MCF 10A (cell line): ENCODE measurements at regions of chr18 and their contacts with region 1.

Region 1: GRCh38 chr18:23918401-23919032 is 96.0 kb upstream of the TTC39C start:
- DNase-seq: peak; percentile 84
- H3K4me3 Mint-ChIP-seq: no peak overlapping the region
- H3K27ac Mint-ChIP-seq: peak overlapping the region; percentile 57
- H3K4me1 Mint-ChIP-seq: peaks cover 18% of the 10 kb centered on the region
- H3K27me3 Mint-ChIP-seq: no peaks in the 10 kb centered on the region
- CTCF ChIP-seq: peak; percentile 74

Region 2: DNA sequence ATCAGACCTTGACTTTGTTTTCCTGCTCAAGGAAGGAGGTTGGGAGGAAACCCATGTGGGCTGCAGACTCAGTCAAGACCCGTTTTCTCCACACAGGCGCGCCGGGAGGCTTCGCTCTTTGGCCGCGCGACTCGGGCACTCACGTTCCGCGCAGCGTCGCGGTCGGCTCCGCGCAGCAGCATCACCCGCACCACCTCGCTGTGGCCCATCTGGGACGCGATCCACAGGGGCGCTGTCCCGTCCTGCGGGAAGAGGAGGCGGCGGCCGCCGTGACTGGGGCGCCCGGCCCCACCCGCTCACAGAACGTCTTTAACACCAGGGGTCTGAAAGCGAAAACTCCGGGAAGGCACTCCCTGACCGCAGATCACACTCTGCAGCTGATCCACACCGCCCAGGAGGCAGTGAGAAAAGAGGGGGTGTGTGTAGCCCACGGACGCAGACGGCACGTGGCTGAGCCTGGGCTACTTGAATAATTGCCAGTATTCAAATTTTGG is 299.1 kb before region 1 on chr18:
- CTCF ChIA-PET with region 1: no interaction called
- POLR2A ChIA-PET with region 1: no interaction called
- intact Hi-C with region 1: loop called (anchors 1 kb)
- DNase-seq: no peak
- H3K4me3 Mint-ChIP-seq: no peak overlapping the region
- H3K27ac Mint-ChIP-seq: no peak overlapping the region
- H3K4me1 Mint-ChIP-seq: peaks cover 6% of the 10 kb centered on the region
- H3K27me3 Mint-ChIP-seq: peaks cover 12% of the 10 kb centered on the region
- CTCF ChIP-seq: no peak

Region 3: GRCh38 chr18:23812546-23813440 is 105.7 kb before region 1 on chr18:
- CTCF ChIA-PET with region 1: interaction called, 3 read pairs
- POLR2A ChIA-PET with region 1: no interaction called
- intact Hi-C with region 1: loop called (anchors 1 kb)
- DNase-seq: peak; percentile 35
- H3K4me3 Mint-ChIP-seq: no peak overlapping the region
- H3K27ac Mint-ChIP-seq: no peak overlapping the region
- H3K4me1 Mint-ChIP-seq: no peaks in the 10 kb centered on the region
- H3K27me3 Mint-ChIP-seq: no peaks in the 10 kb centered on the region
- CTCF ChIP-seq: peak; percentile 59

Region 4: DNA sequence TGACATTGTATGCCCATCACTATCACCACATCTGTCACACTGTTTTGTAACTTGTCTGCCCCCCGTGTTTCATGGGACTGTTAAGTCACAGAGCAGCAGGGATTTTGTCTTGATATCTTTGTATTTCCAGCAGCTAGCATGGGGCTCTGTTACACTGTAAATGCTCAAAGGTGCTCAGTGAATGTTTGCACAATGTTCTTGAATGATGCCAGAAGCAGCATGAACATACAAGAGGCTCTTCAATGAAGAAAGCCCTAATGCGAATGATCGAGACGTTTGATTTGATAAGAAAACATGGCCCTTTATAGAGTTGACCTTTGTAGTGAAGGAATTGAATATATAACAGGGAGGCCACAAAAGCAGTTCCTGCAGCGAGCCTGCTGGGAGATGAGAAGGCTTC is 24.9 kb before region 1 on chr18:
- CTCF ChIA-PET with region 1: interaction called, 10 read pairs
- POLR2A ChIA-PET with region 1: interaction called, 4 read pairs
- intact Hi-C with region 1: no loop called
- DNase-seq: no peak
- H3K4me3 Mint-ChIP-seq: no peak overlapping the region
- H3K27ac Mint-ChIP-seq: no peak overlapping the region
- H3K4me1 Mint-ChIP-seq: peaks cover 29% of the 10 kb centered on the region
- H3K27me3 Mint-ChIP-seq: no peaks in the 10 kb centered on the region
- CTCF ChIP-seq: no peak

Region 5: DNA sequence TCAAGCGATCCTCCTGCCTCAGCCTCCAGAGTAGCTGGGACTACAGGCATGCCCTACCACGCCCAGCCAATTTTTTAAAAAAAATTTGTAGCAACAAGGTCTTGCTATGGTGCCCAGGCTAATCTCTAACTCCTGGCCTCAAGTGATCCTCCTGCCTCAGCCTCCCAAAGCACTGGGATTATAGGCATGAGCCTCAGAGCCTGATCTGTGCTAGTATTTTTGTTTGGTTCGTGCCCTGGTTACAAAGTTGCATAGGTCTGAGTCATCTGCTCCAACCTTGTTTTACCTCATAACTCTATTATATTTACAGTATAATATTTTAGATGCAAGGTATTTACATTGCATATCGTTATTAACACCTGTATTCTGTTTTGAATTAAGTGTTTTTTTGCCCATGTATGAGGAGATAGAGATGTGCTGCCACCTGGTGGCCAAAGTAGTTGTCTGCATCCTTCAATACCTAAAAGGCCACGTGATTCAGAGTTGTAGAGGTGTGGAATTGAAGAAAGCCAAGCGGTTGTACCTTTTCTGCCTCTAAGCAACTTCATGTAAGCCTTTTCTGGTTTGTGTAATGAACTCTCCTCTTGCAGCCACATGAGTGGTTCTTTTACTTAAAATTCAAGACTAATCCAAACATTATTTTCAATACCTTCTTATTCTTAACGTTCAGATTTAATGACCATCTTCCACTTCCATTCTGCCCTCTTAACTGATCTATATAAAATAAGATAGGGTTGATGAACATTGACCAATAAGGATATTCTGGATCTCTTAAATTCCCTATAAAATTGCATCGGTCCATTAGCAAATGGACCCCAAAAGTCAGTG is 200.4 kb after region 1 on chr18:
- CTCF ChIA-PET with region 1: interaction called, 15 read pairs
- POLR2A ChIA-PET with region 1: no interaction called
- intact Hi-C with region 1: loop called (anchors 1 kb)
- DNase-seq: peak; percentile 86
- H3K4me3 Mint-ChIP-seq: no peak overlapping the region
- H3K27ac Mint-ChIP-seq: no peak overlapping the region
- H3K4me1 Mint-ChIP-seq: peaks cover under 1% of the 10 kb centered on the region
- H3K27me3 Mint-ChIP-seq: no peaks in the 10 kb centered on the region
- CTCF ChIP-seq: peak; percentile 75

Region 6: DNA sequence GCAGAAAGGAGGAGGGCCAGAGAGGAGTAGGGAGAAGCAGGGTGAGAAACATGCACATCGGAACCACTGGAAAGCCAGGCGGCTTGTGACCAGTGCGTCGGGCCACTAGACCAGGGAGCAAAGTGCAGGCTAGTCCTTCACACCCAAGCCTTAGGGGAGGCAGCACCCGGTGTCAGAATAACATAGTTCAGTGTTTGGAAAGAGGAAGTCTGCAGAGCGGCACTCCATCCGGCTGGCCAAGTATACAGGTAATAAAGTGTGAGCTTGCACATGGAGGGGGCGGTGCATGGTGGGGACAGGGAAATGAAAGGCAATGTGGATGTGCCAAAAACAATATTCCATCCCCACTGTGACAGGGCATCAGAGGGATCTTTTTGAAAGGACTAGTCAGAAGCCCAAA is 1363.8 kb after region 1 on chr18:
- CTCF ChIA-PET with region 1: no interaction called
- POLR2A ChIA-PET with region 1: no interaction called
- intact Hi-C with region 1: no loop called
- DNase-seq: no peak
- H3K4me3 Mint-ChIP-seq: no peak overlapping the region
- H3K27ac Mint-ChIP-seq: no peak overlapping the region
- H3K4me1 Mint-ChIP-seq: no peaks in the 10 kb centered on the region
- H3K27me3 Mint-ChIP-seq: no peaks in the 10 kb centered on the region
- CTCF ChIP-seq: no peak